ENCODE measurements at regions of chr2 and their contacts with region 1.

Region 1: GRCh38 chr2:73176881-73177644 is 25.3 kb upstream of the NOTO start:
- DNase-seq: peak; percentile 78
- ATAC-seq: peak; percentile 81
- H3K4me3 ChIP-seq: peak overlapping the region; percentile 57 to 77 (median 59)
- H3K27ac ChIP-seq: no peak overlapping the region
- H3K4me1 ChIP-seq: peaks cover 48% of the 10 kb centered on the region
- H3K27me3 ChIP-seq: peaks cover 7 to 61% of the 10 kb centered on the region in 2 experiments; a peak in 4 of 5 replicates
- CTCF ChIP-seq: peak; percentile 100
- EP300 ChIP-seq: peak in 1 of 2 experiments; percentile 11; a peak in 1 of 4 replicates
- POLR2A ChIP-seq: no peak
- RAD21 ChIP-seq: peak; percentile 99

Region 2: GRCh38 chr2:72915907-72916742 is 260.9 kb before region 1 on chr2:
- CTCF ChIA-PET with region 1: no interaction called
- POLR2A ChIA-PET with region 1: no interaction called
- in situ Hi-C with region 1: no loop called
- intact Hi-C with region 1: loop called (anchors 1 kb)
- DNase-seq: peak; percentile 60
- ATAC-seq: peak; percentile 80
- H3K4me3 ChIP-seq: peak overlapping the region; percentile 64 to 83 (median 69)
- H3K27ac ChIP-seq: no peak overlapping the region
- H3K4me1 ChIP-seq: peaks cover 41% of the 10 kb centered on the region
- H3K27me3 ChIP-seq: peaks cover 17 to 86% of the 10 kb centered on the region in 2 experiments
- CTCF ChIP-seq: peak; percentile 26; the same call in 1 of the 2 replicates
- EP300 ChIP-seq: 0 out of 4 replicates have a peak, but pooled peaks of 1 of the 2 experiments have one; percentile 36
- POLR2A ChIP-seq: no peak
- RAD21 ChIP-seq: no peak

Region 3: DNA sequence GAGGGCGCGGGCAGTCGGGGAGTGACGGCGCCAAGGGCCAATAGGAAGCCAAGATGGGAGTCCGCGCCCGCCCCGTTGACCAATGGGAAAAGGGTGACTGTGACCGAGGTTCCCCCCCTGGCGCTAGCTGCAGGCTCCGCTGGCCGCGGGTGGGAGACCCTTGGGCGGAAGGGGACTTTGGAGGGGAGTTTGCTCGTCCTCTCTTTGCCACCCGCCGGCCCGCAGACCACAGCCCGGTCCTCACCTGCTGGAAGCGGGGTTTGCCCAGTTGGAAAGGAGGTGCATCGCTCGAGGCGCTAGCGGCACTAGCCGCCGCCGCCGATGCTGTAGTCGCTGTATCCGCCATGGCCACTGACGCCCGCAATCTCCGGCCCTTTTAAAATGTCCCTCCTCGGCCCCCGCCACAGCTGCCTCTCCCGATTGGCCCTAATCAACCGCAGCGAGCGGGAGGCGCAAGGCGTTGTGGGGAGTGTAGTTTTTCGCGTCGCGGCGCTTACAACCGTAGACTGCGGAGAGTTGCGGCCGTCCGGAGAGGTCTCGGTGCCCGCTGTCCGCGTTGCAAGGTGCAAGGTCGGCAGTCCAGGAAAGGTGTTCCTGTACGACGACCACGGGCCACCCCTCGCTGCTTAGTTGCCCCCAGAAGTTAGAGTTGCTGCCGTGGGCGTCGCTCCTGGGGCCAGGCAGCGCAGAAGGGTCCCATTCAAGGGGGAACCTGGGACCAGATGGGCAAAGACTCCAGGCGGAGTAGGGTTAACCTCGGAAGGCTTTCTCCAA is 105.5 kb before region 1 on chr2 and contains the start of gene SFXN5:
- CTCF ChIA-PET with region 1: no interaction called
- POLR2A ChIA-PET with region 1: interaction called, 12 read pairs
- in situ Hi-C with region 1: no loop called
- intact Hi-C with region 1: no loop called
- DNase-seq: peak; percentile 95
- ATAC-seq: peak; percentile 89
- H3K4me3 ChIP-seq: peak within 1 kb of the TSS; percentile 81 to 98 (median 95)
- H3K27ac ChIP-seq: peak within 1 kb of the TSS; percentile 89
- H3K4me1 ChIP-seq: peaks cover 53% of the 10 kb centered on the region
- H3K27me3 ChIP-seq: no peaks in the 10 kb centered on the region; a peak in 1 of 5 replicates
- CTCF ChIP-seq: peak; percentile 33; the same call in 1 of the 2 replicates
- EP300 ChIP-seq: 0 out of 4 replicates have a peak, but pooled peaks of 1 of the 2 experiments have one; percentile 6
- POLR2A ChIP-seq: peak; percentile 82 to 90
- RAD21 ChIP-seq: peak; percentile 34; the same call in 1 of the 2 replicates
- total RNA-seq, gene SFXN5: 22.2 and 34.9 TPM in 2 replicates

Region 4: DNA sequence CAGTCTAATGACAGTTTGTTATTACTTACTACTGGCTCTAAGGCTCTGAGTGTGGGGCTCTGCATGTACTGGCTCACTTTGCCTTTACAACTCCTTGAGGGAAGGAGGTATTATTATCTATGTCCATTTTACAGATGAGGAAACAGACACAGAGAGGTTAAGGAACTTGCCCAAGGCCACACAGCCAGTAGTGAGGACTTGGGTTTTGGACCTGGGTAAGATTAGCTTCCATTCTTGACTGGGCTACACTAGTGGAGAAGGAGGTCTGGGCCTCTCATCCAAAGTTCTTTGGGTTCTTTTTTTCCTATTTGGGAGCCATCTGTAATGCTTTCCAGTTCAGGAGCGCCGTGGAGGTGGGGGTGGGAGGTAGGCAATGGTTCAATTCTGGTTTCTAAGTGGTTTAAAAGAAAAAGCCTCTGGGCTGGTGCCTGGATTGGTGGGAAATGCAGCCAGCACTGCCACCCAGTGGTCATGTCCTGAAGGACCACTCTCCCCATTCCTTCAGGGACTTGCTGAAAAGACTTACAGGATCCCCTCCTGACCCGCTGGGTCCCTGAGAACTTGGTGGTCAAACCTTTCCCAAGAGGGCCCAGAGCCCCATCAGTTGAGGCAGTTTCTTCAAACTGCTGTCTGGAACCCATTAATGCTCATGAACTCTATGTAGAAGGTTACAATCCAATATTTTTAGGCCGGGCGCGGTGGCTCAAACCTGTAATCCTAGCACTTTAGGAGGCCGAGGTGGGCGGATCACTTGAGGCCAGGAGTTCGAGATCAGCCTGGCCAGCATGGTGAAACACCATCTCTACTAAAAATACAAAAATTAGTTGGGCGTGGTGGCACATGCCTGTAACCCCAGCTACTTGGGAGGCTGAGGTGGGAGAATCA is 13.3 kb before region 1 on chr2:
- CTCF ChIA-PET with region 1: interaction called, 11 read pairs
- POLR2A ChIA-PET with region 1: no interaction called
- in situ Hi-C with region 1: no loop called
- intact Hi-C with region 1: no loop called
- DNase-seq: peak; percentile 71
- ATAC-seq: peak; percentile 92
- H3K4me3 ChIP-seq: no peak overlapping the region
- H3K27ac ChIP-seq: no peak overlapping the region
- H3K4me1 ChIP-seq: no peaks in the 10 kb centered on the region
- H3K27me3 ChIP-seq: peaks cover 4 to 8% of the 10 kb centered on the region in 2 experiments; a peak in 4 of 5 replicates
- CTCF ChIP-seq: peak; percentile 89
- EP300 ChIP-seq: no peak
- POLR2A ChIP-seq: no peak
- RAD21 ChIP-seq: peak; percentile 90

Region 5: DNA sequence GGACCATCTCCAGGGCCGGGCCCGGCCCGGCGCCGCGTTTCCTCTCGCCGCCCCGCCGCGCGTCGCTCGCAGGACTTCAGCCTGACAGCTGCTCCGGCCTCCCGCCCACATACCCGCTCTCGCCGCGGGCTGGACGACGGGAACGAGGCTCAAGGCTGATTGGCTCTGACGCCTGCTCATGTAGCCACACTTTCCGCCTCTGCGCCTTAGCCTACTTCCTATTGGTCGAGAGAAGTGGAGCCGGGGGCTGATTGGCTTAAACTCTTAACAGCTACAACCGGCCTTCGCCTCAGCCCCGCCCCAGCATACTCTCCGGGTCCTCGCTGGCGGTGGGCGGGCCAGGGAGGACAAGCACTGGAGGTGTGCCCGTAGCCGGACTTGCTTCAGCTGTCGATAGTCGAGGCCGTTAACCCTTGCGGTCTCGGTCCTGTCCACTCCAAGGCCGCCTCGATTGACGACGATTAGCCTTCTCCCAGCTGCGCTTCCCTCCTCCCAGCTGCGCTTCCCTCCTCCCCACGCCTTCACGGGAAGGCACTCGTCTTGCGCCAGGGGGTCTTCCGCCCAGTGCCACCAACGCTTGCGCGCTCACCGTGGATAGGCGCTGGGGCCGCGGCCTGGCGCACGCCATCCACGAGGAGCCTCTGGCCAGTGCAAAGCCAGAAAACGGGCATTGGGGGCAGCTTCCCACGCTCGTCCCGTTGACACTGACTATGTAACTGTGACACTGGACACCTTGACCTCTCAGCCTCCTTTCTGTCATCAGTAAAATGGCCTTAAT is 56.3 kb after region 1 on chr2 and contains the start of gene PRADC1:
- CTCF ChIA-PET with region 1: no interaction called
- POLR2A ChIA-PET with region 1: interaction called, 14 read pairs
- in situ Hi-C with region 1: no loop called
- intact Hi-C with region 1: no loop called
- DNase-seq: peak; percentile 100
- ATAC-seq: peak; percentile 90
- H3K4me3 ChIP-seq: peak within 1 kb of the TSS; percentile 84 to 97 (median 89)
- H3K27ac ChIP-seq: peak within 1 kb of the TSS; percentile 78
- H3K4me1 ChIP-seq: peaks cover 39% of the 10 kb centered on the region
- H3K27me3 ChIP-seq: peaks cover 0 to 6% of the 10 kb centered on the region in 2 experiments; a peak in 1 of 5 replicates
- CTCF ChIP-seq: peak; percentile 27; the same call in 1 of the 2 replicates
- EP300 ChIP-seq: peak in 1 of 2 experiments; percentile 42; a peak in 1 of 4 replicates
- POLR2A ChIP-seq: peak; percentile 23 to 80; a peak in 2 of 4 replicates
- RAD21 ChIP-seq: 0 out of 2 replicates have a peak, but pooled peaks have one; percentile 25
- total RNA-seq, gene PRADC1: 30.0 and 37.2 TPM in 2 replicates

Measured in HepG2 (cell line).